ENCODE measurements at regions of chr16 and their contacts with region 1.

Region 1: GRCh38 chr16:67183627-67184328 is at the start of gene MATCAP1:
- DNase-seq: peak; percentile 83
- H3K4me3 ChIP-seq: peak within 1 kb of the TSS; percentile 60
- H3K27me3 ChIP-seq: no peaks in the 10 kb centered on the region
- CTCF ChIP-seq: no peak
- polyA plus RNA-seq, gene MATCAP1: 8.7 and 13.1 TPM in 2 replicates

Region 2: DNA sequence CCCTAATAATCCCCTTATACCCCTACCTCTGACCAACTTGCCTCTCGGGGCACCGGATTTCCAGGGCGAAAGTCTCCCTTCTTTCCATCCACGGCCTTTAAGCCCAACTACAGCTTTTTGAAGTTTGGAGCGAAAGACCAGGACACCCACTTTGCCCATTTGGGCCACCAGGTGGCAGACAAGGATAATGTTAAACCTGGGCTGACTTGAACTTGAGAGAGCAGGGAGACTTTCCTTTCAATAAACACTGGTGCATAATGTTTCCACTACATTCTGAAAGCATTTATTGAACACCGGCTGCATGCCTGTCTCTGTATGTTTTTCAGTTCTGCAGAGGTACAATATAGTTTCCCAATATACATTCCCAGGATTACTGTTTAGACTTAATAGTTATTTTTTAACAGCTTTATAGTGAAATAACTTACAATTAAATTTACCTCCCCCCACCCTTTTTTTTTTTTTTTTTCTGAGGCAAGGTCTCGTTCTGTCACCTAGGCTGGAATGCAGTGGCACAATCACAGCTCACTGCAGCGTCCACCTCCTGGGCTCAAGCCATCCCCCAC is 229.6 kb before region 1 on chr16:
- CTCF ChIA-PET with region 1: interaction called, 14 read pairs
- POLR2A ChIA-PET with region 1: no interaction called
- DNase-seq: no peak
- H3K4me3 ChIP-seq: no peak overlapping the region
- H3K27me3 ChIP-seq: peaks cover 5% of the 10 kb centered on the region
- CTCF ChIP-seq: peak; percentile 81

Region 3: GRCh38 chr16:67104061-67104460 is 79.7 kb before region 1 on chr16:
- CTCF ChIA-PET with region 1: interaction called, 12 read pairs
- POLR2A ChIA-PET with region 1: no interaction called
- DNase-seq: no peak
- H3K4me3 ChIP-seq: no peak overlapping the region
- H3K27me3 ChIP-seq: no peaks in the 10 kb centered on the region
- CTCF ChIP-seq: peak; percentile 45

Region 4: GRCh38 chr16:67141426-67141825 is 42.4 kb before region 1 on chr16:
- CTCF ChIA-PET with region 1: no interaction called
- POLR2A ChIA-PET with region 1: no interaction called
- DNase-seq: no peak
- H3K4me3 ChIP-seq: no peak overlapping the region
- H3K27me3 ChIP-seq: no peaks in the 10 kb centered on the region
- CTCF ChIP-seq: no peak